Activated T-helper 1 cell treated with anti-CD3 and anti-CD28 coated beads, Interleukin-12 subunit alpha, Interleukin-12 subunit beta, Interleukin-2, Interleukin-4 antibody, amounts not matched to agents 30 ng/mL and 10 ng/mL and 1 ng/mL, durations not matched to agents 14 hours and 24 hours and 36 hours (primary cell): ENCODE measurements at regions of chr14 and their contacts with region 1.

Region 1: DNA sequence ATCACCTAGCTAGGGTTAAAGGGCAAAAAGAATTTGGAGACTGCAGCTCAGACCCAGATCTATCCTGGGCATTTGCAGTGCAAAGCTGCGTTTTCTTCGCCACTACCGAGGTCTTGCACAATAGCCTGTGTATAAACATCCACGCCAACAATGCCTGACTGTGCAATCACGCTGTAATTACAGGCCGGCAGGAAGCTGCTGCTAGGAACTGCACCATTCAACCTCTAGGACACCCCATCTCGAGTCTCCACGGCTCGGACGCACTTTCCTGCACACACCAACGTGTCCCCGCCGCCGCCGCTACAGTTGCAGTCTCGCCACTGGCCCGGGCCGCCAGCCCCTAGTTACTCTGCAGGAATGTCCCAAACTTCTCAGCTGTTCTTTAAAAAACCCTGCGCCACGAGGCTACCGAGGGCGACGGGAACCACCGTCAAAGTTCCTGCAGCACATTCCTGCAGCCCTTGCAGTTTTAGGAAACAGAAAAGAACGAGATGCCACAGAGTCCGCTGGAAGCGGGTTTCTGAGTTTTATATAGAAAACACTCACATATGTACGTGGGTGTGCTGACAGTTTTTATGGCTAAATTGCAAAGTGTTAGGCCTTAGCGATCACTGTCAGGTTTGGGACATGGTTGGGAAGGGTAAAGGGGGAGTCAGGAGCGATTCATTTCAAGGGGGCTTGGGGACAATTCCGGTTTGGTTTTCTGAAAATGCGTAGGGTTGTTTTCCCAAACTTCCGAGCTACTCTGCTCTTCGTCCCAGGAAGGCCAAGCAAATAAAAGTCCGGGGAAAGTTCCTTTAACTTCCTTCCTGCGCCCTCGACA is 65.5 kb upstream of the PTGR2 start:
- DNase-seq: peak; percentile 63
- H3K4me3 Mint-ChIP-seq: peak overlapping the region; percentile 92
- H3K27ac Mint-ChIP-seq: peak overlapping the region; percentile 96
- H3K4me1 Mint-ChIP-seq: peaks cover 64% of the 10 kb centered on the region
- H3K27me3 Mint-ChIP-seq: no peaks in the 10 kb centered on the region

Region 2: GRCh38 chr14:72141084-72141483 is 1645.0 kb before region 1 on chr14:
- intact Hi-C with region 1: no loop called
- DNase-seq: no peak
- H3K4me3 Mint-ChIP-seq: no peak overlapping the region
- H3K27ac Mint-ChIP-seq: no peak overlapping the region
- H3K4me1 Mint-ChIP-seq: no peaks in the 10 kb centered on the region
- H3K27me3 Mint-ChIP-seq: peaks cover 2% of the 10 kb centered on the region

Region 3: GRCh38 chr14:73295198-73295796 is 490.8 kb before region 1 on chr14:
- intact Hi-C with region 1: loop called (anchors 10 kb)
- DNase-seq: no peak
- H3K4me3 Mint-ChIP-seq: no peak overlapping the region
- H3K27ac Mint-ChIP-seq: no peak overlapping the region
- H3K4me1 Mint-ChIP-seq: peaks cover 33% of the 10 kb centered on the region
- H3K27me3 Mint-ChIP-seq: no peaks in the 10 kb centered on the region

Region 4: DNA sequence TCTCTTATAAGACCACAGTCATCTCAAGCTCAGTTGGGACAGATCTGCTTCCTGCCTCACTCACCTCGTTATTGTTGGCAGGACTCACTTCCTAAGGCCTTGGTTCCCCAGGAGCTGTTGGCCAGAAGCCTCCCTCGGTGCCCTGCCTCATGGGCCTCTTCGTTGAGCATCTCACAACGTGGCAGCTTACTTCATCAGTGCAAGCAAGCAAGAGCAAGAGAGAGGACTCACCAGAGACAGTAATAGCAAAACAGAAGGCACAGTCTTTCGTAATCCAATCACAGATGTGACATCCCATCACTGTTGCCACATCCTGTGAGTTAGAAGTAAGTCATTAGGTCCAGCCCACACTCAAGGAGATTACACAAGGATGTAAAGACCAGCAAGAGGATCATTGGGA is 322.7 kb before region 1 on chr14:
- intact Hi-C with region 1: no loop called
- DNase-seq: peak; percentile 43
- H3K4me3 Mint-ChIP-seq: peak overlapping the region; percentile 57
- H3K27ac Mint-ChIP-seq: peak overlapping the region; percentile 91
- H3K4me1 Mint-ChIP-seq: peaks cover 78% of the 10 kb centered on the region
- H3K27me3 Mint-ChIP-seq: no peaks in the 10 kb centered on the region

Region 5: GRCh38 chr14:73728717-73729330 is 57.3 kb before region 1 on chr14:
- intact Hi-C with region 1: loop called (anchors 1 kb)
- DNase-seq: peak; percentile 77
- H3K4me3 Mint-ChIP-seq: no peak overlapping the region
- H3K27ac Mint-ChIP-seq: peak overlapping the region; percentile 78
- H3K4me1 Mint-ChIP-seq: peaks cover 30% of the 10 kb centered on the region
- H3K27me3 Mint-ChIP-seq: no peaks in the 10 kb centered on the region

Region 6: DNA sequence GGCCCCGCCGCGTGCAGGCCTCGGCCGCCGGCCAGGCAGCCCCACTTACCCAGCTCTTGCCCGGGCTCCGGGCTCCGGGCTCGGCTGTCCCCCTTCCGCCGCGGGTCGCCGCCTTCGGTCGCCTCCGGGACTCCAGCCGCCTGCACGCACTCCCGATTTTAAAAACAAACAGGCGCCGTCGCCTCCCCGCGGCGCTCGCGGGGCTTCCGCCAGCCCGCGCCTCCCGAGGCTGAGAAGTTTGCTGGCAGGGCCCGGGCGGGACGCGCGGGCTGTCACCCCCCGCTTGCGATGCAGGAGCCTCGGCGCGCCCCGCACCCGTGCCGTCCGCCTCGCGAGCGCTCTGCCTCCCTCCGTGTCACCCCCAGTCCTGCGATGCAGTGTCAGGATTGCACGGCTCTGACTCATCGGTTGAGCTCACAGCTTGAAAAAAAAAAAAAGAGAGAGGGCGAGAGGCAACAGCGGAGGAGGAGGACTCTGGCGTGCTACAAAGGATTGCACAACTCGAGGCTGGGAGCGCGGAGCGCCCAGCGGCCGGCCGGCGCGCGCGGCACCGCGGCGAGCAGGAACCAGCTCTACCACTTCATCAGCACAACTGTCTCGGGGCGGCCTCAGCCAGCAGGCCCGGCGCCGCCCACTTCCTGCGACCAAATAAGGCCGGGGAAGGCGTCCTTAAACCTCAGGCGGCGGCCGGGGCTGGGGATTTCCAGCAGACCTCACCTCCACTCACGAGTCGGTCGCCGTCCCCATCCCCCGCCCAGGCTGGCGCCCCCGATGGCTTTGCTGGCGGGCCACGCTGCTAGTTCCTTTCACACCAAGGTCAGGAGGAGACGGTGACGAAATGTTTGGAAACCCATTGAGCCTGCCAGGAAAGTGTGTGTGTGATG is 26.1 kb before region 1 on chr14:
- intact Hi-C with region 1: loop called (anchors 1 kb)
- DNase-seq: peak; percentile 95
- H3K4me3 Mint-ChIP-seq: peak overlapping the region; percentile 85
- H3K27ac Mint-ChIP-seq: peak overlapping the region; percentile 97
- H3K4me1 Mint-ChIP-seq: peaks cover 79% of the 10 kb centered on the region
- H3K27me3 Mint-ChIP-seq: no peaks in the 10 kb centered on the region

Region 7: DNA sequence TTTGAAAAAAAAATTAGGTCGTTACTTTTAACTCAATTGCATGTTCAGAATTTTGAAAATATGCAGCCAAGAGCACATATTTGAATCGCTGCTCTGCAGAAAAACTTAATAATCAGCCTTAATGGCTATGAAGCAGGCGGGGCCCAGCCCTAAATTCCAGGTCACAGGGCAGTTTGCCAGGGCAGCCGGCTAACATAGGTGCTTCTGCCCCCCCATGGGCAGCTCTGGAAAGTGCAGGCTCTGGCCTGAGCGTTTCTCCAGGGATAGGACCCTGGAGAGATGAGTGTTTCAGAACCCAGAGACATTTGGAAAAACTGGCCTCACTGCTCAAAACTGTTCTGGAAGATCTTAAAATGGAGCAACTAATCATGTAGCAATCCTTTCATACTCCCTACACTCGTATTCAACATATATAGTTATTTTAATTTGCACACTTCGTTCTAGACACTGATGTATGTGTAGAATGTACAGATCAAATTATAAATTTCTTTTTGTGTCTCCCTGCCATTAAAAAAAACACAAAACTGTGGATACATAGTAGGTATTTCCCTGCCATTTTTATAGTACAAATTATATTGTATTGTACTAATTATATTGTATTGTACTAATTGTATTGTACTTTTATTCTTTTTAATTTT is 39.6 kb after region 1 on chr14:
- intact Hi-C with region 1: loop called (anchors 1 kb)
- DNase-seq: peak; percentile 56
- H3K4me3 Mint-ChIP-seq: no peak overlapping the region
- H3K27ac Mint-ChIP-seq: no peak overlapping the region
- H3K4me1 Mint-ChIP-seq: peaks cover 18% of the 10 kb centered on the region
- H3K27me3 Mint-ChIP-seq: no peaks in the 10 kb centered on the region

Region 8: DNA sequence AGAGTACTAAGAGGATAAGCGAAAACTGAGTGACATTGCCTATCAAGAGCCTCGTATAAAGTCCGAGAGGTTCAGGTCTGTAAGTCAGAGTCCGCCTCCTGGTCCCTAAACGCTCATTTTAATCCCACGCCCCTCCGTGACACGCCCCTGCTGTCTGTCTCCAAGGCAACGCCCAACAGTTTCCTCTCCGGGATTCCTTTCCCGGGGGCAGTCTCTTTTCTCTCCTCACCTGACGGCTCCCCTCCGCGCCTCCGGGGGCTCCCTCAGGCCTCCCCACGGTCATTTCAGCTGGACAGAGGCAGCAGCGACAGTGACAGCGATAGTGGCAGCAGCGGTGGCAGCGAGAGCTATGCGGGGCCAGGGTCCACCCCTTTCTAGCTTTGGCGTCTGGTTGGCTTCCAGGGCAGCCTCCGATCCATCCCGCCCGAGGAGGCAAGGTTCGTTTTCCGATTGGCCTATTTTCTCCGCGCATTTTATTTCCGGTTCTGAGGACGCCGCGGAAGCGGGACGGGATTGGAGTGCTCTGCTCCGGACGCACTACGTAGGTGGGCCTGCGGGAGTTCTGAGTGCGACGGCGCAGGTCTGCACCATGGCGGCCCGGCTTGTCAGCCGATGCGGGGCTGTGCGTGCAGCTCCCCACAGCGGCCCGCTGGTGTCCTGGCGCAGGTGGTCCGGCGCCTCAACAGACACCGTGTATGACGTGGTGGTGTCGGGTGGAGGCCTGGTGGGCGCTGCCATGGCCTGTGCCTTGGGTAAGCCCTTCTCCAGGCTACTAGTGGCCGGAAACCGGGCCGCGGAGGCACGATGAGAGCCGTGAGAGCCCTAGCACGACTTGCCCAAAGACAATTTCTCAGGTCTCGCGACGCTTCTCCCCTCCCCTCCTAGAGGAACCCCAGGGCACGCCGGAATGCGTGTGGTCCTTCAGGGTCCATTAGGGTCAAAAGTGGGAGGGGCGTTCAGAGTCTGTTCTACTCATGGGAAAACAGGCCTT is 164.0 kb after region 1 on chr14 and contains the starts of genes COQ6 and FAM161B:
- intact Hi-C with region 1: loop called (anchors 2 kb)
- DNase-seq: peak; percentile 93
- H3K4me3 Mint-ChIP-seq: peak within 1 kb of the TSS; percentile 99
- H3K27ac Mint-ChIP-seq: peak within 1 kb of the TSS; percentile 88
- H3K4me1 Mint-ChIP-seq: peaks cover 21% of the 10 kb centered on the region
- H3K27me3 Mint-ChIP-seq: no peaks in the 10 kb centered on the region
- total RNA-seq, gene COQ6: 17.9 and 19.2 TPM in 2 replicates
- total RNA-seq, gene FAM161B: 0.76 and 0.83 TPM in 2 replicates

Region 9: GRCh38 chr14:74302634-74303577 is 516.8 kb after region 1 on chr14 and contains the start of gene ABCD4:
- intact Hi-C with region 1: loop called (anchors 5 kb)
- DNase-seq: peak; percentile 79
- H3K4me3 Mint-ChIP-seq: peak within 1 kb of the TSS; percentile 99
- H3K27ac Mint-ChIP-seq: peak within 1 kb of the TSS; percentile 86
- H3K4me1 Mint-ChIP-seq: peaks cover 22% of the 10 kb centered on the region
- H3K27me3 Mint-ChIP-seq: no peaks in the 10 kb centered on the region
- total RNA-seq, gene ABCD4: 38.8 and 44.4 TPM in 2 replicates